B cell (primary cell): ENCODE measurements at regions of chrX and their contacts with region 1.

Region 1: DNA sequence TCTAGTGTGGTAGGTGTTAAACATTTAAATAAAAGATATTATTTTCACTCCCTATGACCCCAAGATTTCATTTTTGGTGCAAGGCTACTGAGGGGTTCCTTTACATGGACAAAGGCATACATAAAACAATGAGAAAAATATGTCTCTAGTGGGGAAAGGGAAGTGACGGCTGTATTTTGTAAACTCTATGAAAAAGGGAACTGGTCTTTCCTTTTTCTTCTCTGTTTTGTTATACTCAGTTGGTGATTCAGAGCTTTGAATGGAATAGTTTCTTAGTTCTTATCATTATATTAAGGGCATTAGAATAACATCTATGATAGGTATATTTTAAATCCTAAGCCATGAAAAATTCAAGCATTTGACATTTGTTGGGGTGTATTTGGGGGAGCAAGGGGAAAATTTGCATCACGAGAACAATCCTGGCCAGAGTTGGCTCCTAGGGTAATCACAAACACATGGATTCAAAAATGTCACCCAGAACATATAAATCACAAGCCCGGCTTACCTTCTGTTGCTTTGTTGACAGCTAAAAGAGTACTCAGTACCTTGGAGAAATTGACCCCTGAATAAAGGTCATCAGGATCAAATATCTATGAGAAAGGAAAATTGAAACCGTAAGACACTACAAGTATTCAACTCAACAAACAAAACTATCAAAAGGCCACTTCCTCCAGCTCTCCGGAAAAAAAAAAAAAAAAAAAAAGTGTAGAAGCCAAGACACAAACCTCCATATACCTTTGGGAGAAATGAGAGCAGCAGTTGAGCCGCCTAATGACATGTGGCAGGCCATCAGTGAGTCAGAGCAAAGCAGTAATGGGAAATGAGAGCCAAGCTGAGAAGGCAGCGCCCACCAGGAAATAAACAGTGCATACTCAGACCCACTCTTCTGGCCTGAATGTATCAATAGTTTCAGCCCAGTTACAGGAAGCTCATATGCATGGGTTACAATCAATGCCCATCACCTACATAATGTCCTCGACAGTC is 33.4 kb downstream of the ARHGEF6 start:
- DNase-seq: peak; percentile 47
- ATAC-seq: peak; percentile 74
- H3K4me3 ChIP-seq: no peak overlapping the region
- H3K4me3 Mint-ChIP-seq: peak overlapping the region; percentile 72
- H3K27ac ChIP-seq: peak overlapping the region; percentile 69 to 84
- H3K27ac Mint-ChIP-seq: peak overlapping the region; percentile 97
- H3K4me1 ChIP-seq: peaks cover 60 to 76% of the 10 kb centered on the region in 2 donors
- H3K4me1 Mint-ChIP-seq: peaks cover 75% of the 10 kb centered on the region
- H3K27me3 ChIP-seq: no peaks in the 10 kb centered on the region
- H3K27me3 Mint-ChIP-seq: no peaks in the 10 kb centered on the region
- CTCF ChIP-seq: no peak

Region 2: DNA sequence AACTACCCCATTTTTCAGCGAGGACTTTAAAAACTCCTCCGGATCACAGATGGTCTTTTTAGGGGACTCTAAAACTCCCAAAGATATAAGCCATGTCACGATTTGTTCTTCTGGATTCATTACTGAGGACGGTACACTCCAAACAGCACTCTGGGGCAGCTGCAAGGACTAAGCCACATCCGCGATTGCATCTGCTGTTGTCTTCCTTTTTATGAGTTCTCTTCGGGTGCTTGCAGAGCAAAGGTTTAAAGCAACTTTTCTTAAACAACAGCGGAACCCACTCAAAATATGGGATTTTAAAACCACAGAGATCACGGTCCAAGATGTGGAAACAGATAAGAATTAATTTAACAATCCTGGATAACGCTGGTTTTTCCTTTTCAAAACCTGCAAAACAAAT is 33.5 kb after region 1 on chrX and contains the start of gene ARHGEF6:
- CTCF ChIA-PET with region 1: no interaction called
- POLR2A ChIA-PET with region 1: no interaction called
- intact Hi-C with region 1: loop called (anchors 5 kb)
- DNase-seq: peak; percentile 37
- ATAC-seq: peak; percentile 58
- H3K4me3 ChIP-seq: peak within 1 kb of the TSS; percentile 56 to 81 (median 63)
- H3K4me3 Mint-ChIP-seq: peak within 1 kb of the TSS; percentile 91
- H3K27ac ChIP-seq: peak within 1 kb of the TSS; percentile 71 to 88
- H3K27ac Mint-ChIP-seq: peak within 1 kb of the TSS; percentile 87
- H3K4me1 ChIP-seq: peaks cover 30 to 41% of the 10 kb centered on the region in 2 donors
- H3K4me1 Mint-ChIP-seq: peaks cover 56% of the 10 kb centered on the region
- H3K27me3 ChIP-seq: no peaks in the 10 kb centered on the region
- H3K27me3 Mint-ChIP-seq: no peaks in the 10 kb centered on the region
- CTCF ChIP-seq: no peak
- total RNA-seq, gene ARHGEF6: 43.4 and 45.6 TPM in 2 replicates

Region 3: GRCh38 chrX:136880452-136881013 is 133.2 kb after region 1 on chrX and contains the start of gene RBMX:
- CTCF ChIA-PET with region 1: interaction called, 4 read pairs
- POLR2A ChIA-PET with region 1: interaction called, 15 read pairs
- intact Hi-C with region 1: no loop called
- DNase-seq: peak; percentile 94
- ATAC-seq: peak; percentile 86
- H3K4me3 ChIP-seq: peak within 1 kb of the TSS; percentile 67 to 97 (median 87)
- H3K4me3 Mint-ChIP-seq: peak within 1 kb of the TSS; percentile 98
- H3K27ac ChIP-seq: peak within 1 kb of the TSS; percentile 96
- H3K27ac Mint-ChIP-seq: peak within 1 kb of the TSS; percentile 100
- H3K4me1 ChIP-seq: peaks cover 0 to 8% of the 10 kb centered on the region in 2 donors
- H3K4me1 Mint-ChIP-seq: peaks cover 9% of the 10 kb centered on the region
- H3K27me3 ChIP-seq: no peaks in the 10 kb centered on the region
- H3K27me3 Mint-ChIP-seq: no peaks in the 10 kb centered on the region
- CTCF ChIP-seq: no peak
- total RNA-seq, gene RBMX: 231 and 239 TPM in 2 replicates